ENCODE measurements at regions of chr16 and their contacts with region 1.

Region 1: GRCh38 chr16:20849587-20850390 is 43.5 kb downstream of the REXO5 start:
- DNase-seq: peak; percentile 75
- ATAC-seq: peak; percentile 9

Region 2: GRCh38 chr16:20568404-20568803 is 281.4 kb before region 1 on chr16:
- intact Hi-C with region 1: no loop called
- DNase-seq: no peak
- ATAC-seq: no peak

Region 3: GRCh38 chr16:20791923-20792612 is 57.7 kb before region 1 on chr16:
- intact Hi-C with region 1: no loop called
- DNase-seq: no peak
- ATAC-seq: no peak

Region 4: GRCh38 chr16:20814784-20815183 is 35.0 kb before region 1 on chr16:
- intact Hi-C with region 1: no loop called
- DNase-seq: no peak
- ATAC-seq: no peak

Region 5: DNA sequence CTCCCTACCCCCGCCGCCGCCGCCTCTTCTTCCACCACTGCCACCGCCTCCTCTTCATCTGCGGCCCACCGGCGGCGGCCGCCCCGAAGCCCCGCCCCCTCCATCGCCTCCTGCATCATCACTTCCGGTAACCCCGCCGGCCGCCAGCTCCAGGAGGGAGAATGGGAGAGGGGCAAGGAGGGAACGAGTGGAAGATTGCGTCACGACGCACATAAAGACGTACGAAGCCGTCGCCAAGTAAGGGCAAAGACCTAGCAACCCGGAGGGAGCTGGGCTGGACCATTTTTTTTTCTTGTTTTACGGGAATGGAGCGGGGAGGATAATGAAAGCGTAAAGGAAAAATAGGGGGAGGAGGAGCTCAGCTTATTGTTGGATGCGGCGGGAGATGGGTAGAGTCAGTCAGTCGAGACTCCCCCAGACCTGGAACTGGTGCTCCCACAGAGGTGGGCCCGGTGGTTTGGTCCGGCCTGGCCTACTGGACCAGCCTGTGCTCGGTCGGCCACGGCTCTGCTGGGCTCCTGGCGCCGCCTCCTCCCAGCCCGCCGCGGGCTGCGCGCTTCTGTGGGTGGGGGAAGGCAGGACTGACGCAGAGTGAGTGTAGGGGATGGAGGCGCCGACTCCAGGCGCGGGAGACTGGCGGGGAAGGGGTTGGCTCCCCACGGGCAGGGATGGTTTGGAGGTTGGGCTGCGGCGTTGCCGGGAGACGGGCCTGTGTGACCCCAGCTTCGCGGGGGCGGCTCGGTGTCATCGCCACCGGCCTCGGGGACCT is 50.7 kb after region 1 on chr16 and contains the starts of genes DCUN1D3 and LYRM1:
- intact Hi-C with region 1: loop called (anchors 10 kb)
- DNase-seq: peak; percentile 98
- ATAC-seq: peak; percentile 93
- total RNA-seq, gene DCUN1D3: 16.5 TPM
- total RNA-seq, gene LYRM1: 71.5 TPM

Region 6: DNA sequence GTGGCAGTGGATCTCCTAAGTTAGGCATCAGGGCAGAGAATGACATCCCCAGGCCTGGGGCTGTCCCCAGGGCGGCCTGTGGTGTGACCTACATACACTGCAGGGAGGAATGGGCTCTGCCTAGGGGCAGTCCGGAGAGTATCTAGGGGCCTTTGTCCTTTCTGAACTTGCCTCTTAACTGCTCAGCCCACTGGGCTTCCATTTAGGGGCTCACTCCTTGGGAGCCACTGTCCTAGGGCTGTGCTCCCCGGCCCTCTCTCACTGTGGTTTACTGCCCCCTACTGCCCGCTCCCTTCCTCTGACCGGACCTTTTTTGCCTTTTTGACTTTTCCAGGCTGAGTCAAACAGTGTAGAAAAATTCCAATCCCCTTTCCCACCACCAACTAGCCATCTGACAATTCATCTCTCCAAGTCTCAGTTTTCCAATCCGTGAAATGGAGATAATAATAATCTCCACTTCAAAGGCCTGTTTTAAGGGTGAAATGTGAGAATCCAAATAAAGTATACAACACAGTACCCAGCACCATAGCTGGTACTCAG is 234.0 kb after region 1 on chr16:
- intact Hi-C with region 1: loop called (anchors 5 kb)
- DNase-seq: peak; percentile 75
- ATAC-seq: peak; percentile 97

Measured in left ventricle myocardium superior (tissue), 1 donor.